Uterus (tissue), 4 donors: ENCODE measurements at regions of chr1 and their contacts with region 1.

Region 1: DNA sequence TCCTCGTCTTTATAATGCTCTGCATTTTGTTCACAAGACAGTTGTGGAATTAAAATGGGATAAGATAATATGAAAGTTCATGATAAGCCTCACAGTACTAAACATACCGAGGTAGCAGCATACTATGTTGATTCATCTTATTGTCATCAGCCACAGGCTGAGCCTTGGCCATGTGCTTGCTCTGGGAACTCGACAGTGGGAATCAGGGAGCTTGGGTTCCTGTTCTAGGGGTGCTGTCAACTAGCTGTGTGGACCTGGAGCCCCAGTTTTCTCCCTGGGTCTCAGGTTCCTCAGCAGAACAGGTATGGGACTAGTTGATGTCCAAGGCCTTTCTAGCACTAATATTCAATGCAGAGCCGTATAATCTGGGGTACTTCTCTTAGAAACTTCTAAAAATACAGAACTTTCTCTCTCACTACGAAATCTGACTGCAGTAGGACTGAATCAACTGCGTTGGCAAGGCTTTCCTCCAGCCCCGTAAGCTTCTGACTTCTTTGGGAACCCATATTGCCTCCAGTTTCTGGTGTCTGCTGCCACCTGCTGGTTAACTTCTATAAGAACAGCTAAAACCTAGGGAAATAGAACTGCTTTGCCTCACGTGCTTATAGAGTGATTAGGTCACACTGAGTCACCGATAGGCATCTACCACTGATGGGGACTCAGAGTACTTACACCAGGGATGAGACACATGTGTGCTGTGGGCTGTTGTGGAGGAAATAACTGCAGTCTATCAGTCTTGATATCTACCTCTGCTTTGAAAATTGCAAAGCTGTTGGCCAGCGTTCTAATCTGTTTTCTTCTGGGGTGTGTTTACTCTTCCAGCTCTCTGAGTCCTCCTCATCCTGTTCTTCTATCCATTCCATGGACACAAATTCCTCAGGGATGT is 110.9 kb downstream of the RGL1 start:
- DNase-seq: peak; percentile 75 to 85
- H3K4me3 ChIP-seq: no peak overlapping the region
- H3K27ac ChIP-seq: peak overlapping the region; percentile 52 to 67
- H3K4me1 ChIP-seq: peaks cover 0 to 6% of the 10 kb centered on the region in 2 donors
- H3K27me3 ChIP-seq: no peaks in the 10 kb centered on the region
- CTCF ChIP-seq: peak; percentile 79 to 93 (median 88)
- POLR2A ChIP-seq: no peak

Region 2: DNA sequence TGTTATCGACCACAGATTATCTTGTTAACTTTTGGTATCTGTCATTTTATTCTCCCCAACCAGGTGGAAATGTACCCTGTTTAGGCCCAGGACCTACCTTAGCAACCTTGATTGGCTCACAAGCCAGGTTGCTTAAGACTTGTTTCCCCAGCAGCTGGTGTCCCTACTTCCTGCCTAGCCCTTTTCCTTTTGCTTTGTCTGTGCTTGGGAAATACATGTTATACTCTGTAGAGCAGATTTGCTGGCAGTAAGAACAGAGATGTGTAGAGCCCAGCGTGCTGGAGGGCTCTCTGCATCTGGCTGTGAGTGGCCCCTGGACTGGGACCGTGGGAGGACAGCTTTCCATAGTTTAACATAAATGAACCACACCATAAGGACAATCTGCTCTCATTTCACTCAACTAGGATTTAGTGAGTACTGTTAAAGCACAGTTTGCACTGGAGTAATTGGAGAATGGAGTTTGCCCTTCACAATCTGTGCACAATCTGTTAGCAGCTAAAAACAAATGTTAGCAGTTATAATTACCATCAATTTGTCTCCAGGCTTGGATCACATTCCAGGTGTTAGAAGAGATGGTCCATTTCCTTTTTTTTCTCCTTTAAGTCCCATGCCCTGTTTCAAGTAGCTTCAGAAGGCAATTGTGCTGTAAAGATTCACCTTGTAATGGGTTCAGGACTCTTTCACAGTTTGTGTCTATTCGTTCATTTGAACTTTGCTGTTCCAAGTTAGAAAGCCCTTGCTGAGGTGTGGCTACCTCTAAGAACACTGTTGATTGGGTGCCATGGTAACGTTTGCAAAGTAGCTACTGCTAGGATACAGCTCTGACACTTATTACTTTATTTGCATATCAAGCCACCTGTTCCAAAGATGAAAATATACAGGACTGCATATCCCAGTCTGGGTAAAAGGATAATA is 263.1 kb before region 1 on chr1 and contains the start of gene APOBEC4:
- intact Hi-C with region 1: loop called (anchors 5 kb)
- DNase-seq: no peak
- H3K4me3 ChIP-seq: no peak within 1 kb of the TSS
- H3K27ac ChIP-seq: no peak within 1 kb of the TSS
- H3K4me1 ChIP-seq: no peaks in the 10 kb centered on the region
- H3K27me3 ChIP-seq: no peaks in the 10 kb centered on the region
- CTCF ChIP-seq: no peak
- POLR2A ChIP-seq: no peak
- total RNA-seq, gene APOBEC4: 0.40 to 0.76 TPM in 2 of 4 donors, not detected in the others